WTC11 (cell line): ENCODE measurements at regions of chr6 and their contacts with region 1.

Region 1: GRCh38 chr6:76682842-76683241 is 610.4 kb upstream of the IMPG1 start:
- DNase-seq: no peak
- ATAC-seq: no peak
- H3K4me3 Mint-ChIP-seq: no peak overlapping the region
- H3K27ac Mint-ChIP-seq: no peak overlapping the region
- H3K4me1 Mint-ChIP-seq: peaks cover 39% of the 10 kb centered on the region
- H3K27me3 Mint-ChIP-seq: no peaks in the 10 kb centered on the region
- CTCF ChIP-seq: peak; percentile 31; the same call in 1 of the 2 replicates

Region 2: GRCh38 chr6:76441875-76442274 is 241.0 kb before region 1 on chr6:
- CTCF ChIA-PET with region 1: no interaction called
- POLR2A ChIA-PET with region 1: no interaction called
- DNase-seq: peak; percentile 29
- ATAC-seq: peak; percentile 95
- H3K4me3 Mint-ChIP-seq: no peak overlapping the region
- H3K27ac Mint-ChIP-seq: peak overlapping the region; percentile 83; the same call in 1 of the 2 replicates
- H3K4me1 Mint-ChIP-seq: peaks cover 30% of the 10 kb centered on the region
- H3K27me3 Mint-ChIP-seq: no peaks in the 10 kb centered on the region
- CTCF ChIP-seq: no peak

Region 3: DNA sequence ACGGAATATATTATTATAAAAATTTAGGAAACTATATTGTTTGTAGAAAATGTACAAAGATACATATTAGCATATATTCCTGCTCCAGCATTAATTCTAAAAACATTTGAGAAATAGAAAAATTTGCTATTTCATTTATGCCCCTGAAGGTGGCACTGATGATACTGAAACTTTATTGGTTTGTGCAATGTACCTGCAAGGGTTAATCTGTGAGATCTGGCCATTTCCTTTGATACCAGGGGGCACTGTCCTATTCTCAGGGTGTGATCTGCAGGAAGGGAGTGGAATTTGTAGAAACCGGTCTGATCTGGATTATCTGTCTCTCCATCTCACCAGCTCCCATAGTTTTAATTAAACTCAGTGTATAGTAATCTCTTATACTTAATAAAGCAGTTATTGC is 14.7 kb after region 1 on chr6:
- CTCF ChIA-PET with region 1: interaction called, 13 read pairs
- POLR2A ChIA-PET with region 1: no interaction called
- DNase-seq: no peak
- ATAC-seq: peak; percentile 84
- H3K4me3 Mint-ChIP-seq: no peak overlapping the region
- H3K27ac Mint-ChIP-seq: no peak overlapping the region
- H3K4me1 Mint-ChIP-seq: peaks cover 12% of the 10 kb centered on the region
- H3K27me3 Mint-ChIP-seq: peaks cover 13% of the 10 kb centered on the region
- CTCF ChIP-seq: no peak

Region 4: DNA sequence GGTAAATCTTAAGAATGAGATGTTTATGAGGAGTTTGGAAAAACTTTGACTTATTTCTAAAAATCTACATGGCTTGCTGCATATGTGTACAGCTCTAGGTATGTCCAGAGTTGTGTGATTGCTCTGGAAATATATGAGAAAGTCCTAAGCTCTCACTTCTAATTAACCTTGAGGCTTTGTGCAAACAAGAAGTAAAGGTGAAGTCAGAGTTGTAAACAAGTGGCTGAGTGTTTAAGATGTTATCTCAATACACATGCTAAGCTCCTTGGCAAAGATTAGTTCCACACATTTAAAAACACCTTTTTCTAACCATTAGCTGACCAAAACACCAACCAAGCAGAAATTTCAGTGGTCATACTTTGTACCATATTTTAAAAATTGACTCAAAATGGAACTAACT is 96.2 kb after region 1 on chr6:
- CTCF ChIA-PET with region 1: no interaction called
- POLR2A ChIA-PET with region 1: no interaction called
- DNase-seq: no peak
- ATAC-seq: no peak
- H3K4me3 Mint-ChIP-seq: no peak overlapping the region
- H3K27ac Mint-ChIP-seq: no peak overlapping the region
- H3K4me1 Mint-ChIP-seq: peaks cover 9% of the 10 kb centered on the region; the same call in 1 of the 2 replicates
- H3K27me3 Mint-ChIP-seq: no peaks in the 10 kb centered on the region
- CTCF ChIP-seq: no peak

Region 5: GRCh38 chr6:76861403-76861802 is 178.6 kb after region 1 on chr6:
- CTCF ChIA-PET with region 1: interaction called, 42 read pairs
- POLR2A ChIA-PET with region 1: no interaction called
- DNase-seq: peak; percentile 64
- ATAC-seq: peak; percentile 99
- H3K4me3 Mint-ChIP-seq: no peak overlapping the region
- H3K27ac Mint-ChIP-seq: no peak overlapping the region
- H3K4me1 Mint-ChIP-seq: peaks cover 4% of the 10 kb centered on the region
- H3K27me3 Mint-ChIP-seq: peaks cover under 1% of the 10 kb centered on the region; the same call in 1 of the 2 replicates
- CTCF ChIP-seq: peak; percentile 37; the same call in 1 of the 2 replicates